IMR-90 (cell line): ENCODE measurements at regions of chr22 and their contacts with region 1.

Region 1: GRCh38 chr22:38766076-38766777 is 10.4 kb upstream of the SUN2 start:
- DNase-seq: peak; percentile 64
- ATAC-seq: peak; percentile 56
- H3K4me3 ChIP-seq: no peak overlapping the region
- H3K27ac ChIP-seq: no peak overlapping the region
- H3K4me1 ChIP-seq: peaks cover 3% of the 10 kb centered on the region
- H3K27me3 ChIP-seq: no peaks in the 10 kb centered on the region
- CTCF ChIP-seq: peak; percentile 66
- POLR2A ChIP-seq: no peak
- RAD21 ChIP-seq: peak; percentile 46

Region 2: GRCh38 chr22:38733329-38733723 is 32.9 kb before region 1 on chr22:
- CTCF ChIA-PET with region 1: no interaction called
- POLR2A ChIA-PET with region 1: no interaction called
- dilution Hi-C with region 1: no loop called
- in situ Hi-C with region 1: no loop called
- intact Hi-C with region 1: loop called (anchors 1 kb)
- DNase-seq: no peak
- ATAC-seq: peak; percentile 53
- H3K4me3 ChIP-seq: no peak overlapping the region
- H3K27ac ChIP-seq: no peak overlapping the region
- H3K4me1 ChIP-seq: peaks cover 5% of the 10 kb centered on the region
- H3K27me3 ChIP-seq: no peaks in the 10 kb centered on the region
- CTCF ChIP-seq: peak; percentile 54
- POLR2A ChIP-seq: no peak
- RAD21 ChIP-seq: peak; percentile 34; the same call in 1 of the 2 replicates

Region 3: GRCh38 chr22:38872172-38872830 is 106.1 kb after region 1 on chr22 and contains the start of gene CBX6:
- CTCF ChIA-PET with region 1: interaction called, 5 read pairs
- POLR2A ChIA-PET with region 1: interaction called, 3 read pairs
- dilution Hi-C with region 1: no loop called
- in situ Hi-C with region 1: no loop called
- intact Hi-C with region 1: loop called (anchors 1 kb)
- DNase-seq: peak; percentile 90
- ATAC-seq: peak; percentile 82
- H3K4me3 ChIP-seq: peak within 1 kb of the TSS; percentile 95
- H3K27ac ChIP-seq: peak within 1 kb of the TSS; percentile 95
- H3K4me1 ChIP-seq: no peaks in the 10 kb centered on the region
- H3K27me3 ChIP-seq: no peaks in the 10 kb centered on the region
- CTCF ChIP-seq: no peak
- POLR2A ChIP-seq: no peak; the same call in 1 of the 2 replicates
- RAD21 ChIP-seq: no peak
- total RNA-seq, gene CBX6: 15.2 and 17.5 TPM in 2 replicates

Region 4: DNA sequence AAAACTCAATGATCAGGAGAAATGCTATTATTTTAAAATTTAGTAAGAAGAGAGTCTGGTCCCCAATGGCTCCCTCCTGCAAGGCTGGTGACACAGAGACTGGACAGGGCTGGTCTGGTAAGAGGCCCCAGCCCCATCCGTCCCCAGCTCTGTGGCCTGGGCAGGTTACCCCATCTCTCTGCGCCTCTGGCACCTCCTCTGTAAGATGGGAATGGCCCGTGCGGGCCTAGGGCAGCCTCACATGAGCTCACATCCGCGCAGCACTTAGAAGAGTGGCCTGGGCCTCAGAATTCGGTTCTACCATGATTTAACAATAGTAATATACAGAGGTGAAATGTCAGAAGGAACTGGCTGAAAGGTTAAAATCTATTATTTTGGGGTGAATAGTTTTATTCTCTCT is 275.7 kb after region 1 on chr22:
- CTCF ChIA-PET with region 1: no interaction called
- POLR2A ChIA-PET with region 1: no interaction called
- dilution Hi-C with region 1: no loop called
- in situ Hi-C with region 1: no loop called
- intact Hi-C with region 1: no loop called
- DNase-seq: no peak
- ATAC-seq: no peak
- H3K4me3 ChIP-seq: no peak overlapping the region
- H3K27ac ChIP-seq: no peak overlapping the region
- H3K4me1 ChIP-seq: peaks cover 3% of the 10 kb centered on the region; the same call in 1 of the 2 replicates
- H3K27me3 ChIP-seq: no peaks in the 10 kb centered on the region
- CTCF ChIP-seq: no peak
- POLR2A ChIP-seq: no peak
- RAD21 ChIP-seq: no peak

Region 5: DNA sequence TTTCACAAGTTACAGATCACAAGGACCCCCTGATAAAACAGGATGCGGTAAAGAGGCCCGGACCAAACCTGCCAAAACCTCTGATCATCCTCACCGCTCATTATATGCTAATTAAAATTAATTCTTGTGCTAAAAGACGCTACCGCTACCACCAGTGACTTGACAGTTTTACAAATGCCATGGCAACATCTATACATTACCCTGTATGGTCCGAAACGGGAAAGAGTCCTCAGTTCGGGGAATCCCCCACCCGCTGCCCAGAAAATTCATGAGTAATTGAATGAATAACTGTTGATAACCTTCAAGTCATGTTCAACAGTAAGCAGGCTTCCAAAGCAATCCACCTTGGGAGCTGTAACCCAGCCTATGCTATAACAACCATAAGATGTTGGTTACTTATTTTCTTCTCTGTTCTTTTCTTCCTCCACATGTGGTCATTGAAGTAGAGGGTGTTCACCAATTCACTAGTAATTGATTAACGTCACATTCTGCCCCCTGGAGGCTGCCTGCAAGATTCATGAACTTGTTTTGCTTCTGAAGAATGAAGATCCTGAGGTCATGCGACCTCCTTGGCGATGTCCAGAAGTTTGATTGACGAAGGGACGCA is 351.5 kb after region 1 on chr22:
- CTCF ChIA-PET with region 1: interaction called, 4 read pairs
- POLR2A ChIA-PET with region 1: no interaction called
- dilution Hi-C with region 1: no loop called
- in situ Hi-C with region 1: no loop called
- intact Hi-C with region 1: loop called (anchors 5 kb)
- DNase-seq: peak; percentile 49
- ATAC-seq: no peak; the same call in 1 of the 2 replicates
- H3K4me3 ChIP-seq: no peak overlapping the region
- H3K27ac ChIP-seq: no peak overlapping the region
- H3K4me1 ChIP-seq: no peaks in the 10 kb centered on the region
- H3K27me3 ChIP-seq: peaks cover 38% of the 10 kb centered on the region
- CTCF ChIP-seq: peak; percentile 58
- POLR2A ChIP-seq: no peak
- RAD21 ChIP-seq: peak; percentile 49